CD4-positive, alpha-beta T cell (primary cell): ENCODE measurements at regions of chr1 and their contacts with region 1.

Region 1: DNA sequence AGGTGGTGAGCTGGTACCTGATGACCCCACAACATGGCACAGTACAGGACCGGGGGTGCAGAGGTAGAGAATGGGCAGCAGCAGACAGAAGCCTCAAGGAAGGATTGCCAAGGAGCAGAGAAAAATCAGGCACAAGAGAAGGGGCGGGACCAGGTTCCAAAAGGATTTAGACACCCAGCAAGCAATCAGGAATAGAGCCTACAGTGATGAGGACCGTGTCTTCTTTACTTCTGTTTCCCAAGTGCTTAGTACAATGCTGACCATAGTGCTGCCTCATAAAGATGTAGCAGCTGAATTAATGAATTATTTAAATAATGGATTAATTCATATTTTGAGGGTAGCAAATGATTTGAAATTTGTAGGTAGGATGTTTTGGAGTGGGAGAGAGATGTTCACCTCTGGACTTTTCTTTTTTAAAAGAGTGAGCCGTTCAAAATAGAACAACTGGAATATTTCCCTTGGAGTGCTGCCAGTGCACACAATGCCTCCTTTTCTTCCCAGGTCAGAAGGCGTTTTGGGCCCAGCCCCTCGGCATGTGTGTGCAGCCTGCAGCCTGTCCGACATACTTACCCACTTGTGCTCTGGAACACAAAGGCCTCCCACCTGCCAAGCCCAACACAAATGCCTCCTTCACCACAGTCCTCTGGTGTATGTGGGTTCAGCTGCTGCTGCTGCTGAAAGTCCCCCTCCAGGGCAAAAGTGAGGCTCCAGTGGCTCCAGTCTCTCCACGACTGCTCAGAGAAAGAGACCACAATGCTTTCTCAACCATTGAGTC is 19.6 kb downstream of the KANK4 start:
- DNase-seq: no peak
- ATAC-seq: no peak
- H3K4me3 ChIP-seq: no peak overlapping the region
- H3K4me3 Mint-ChIP-seq: no peak overlapping the region
- H3K27ac ChIP-seq: no peak overlapping the region
- H3K27ac Mint-ChIP-seq: no peak overlapping the region
- H3K4me1 ChIP-seq: peaks cover 14% of the 10 kb centered on the region
- H3K4me1 Mint-ChIP-seq: peaks cover 11% of the 10 kb centered on the region
- H3K27me3 ChIP-seq: no peaks in the 10 kb centered on the region
- H3K27me3 Mint-ChIP-seq: no peaks in the 10 kb centered on the region
- CTCF ChIP-seq: no peak

Region 2: GRCh38 chr1:62175568-62176179 is 123.9 kb before region 1 on chr1:
- CTCF ChIA-PET with region 1: no interaction called
- POLR2A ChIA-PET with region 1: no interaction called
- intact Hi-C with region 1: no loop called
- DNase-seq: peak in 12 of 14 experiments; percentile 2 to 69 (median 18)
- ATAC-seq: peak; percentile 41
- H3K4me3 ChIP-seq: no peak overlapping the region
- H3K4me3 Mint-ChIP-seq: no peak overlapping the region
- H3K27ac ChIP-seq: no peak overlapping the region
- H3K27ac Mint-ChIP-seq: no peak overlapping the region
- H3K4me1 ChIP-seq: no peaks in the 10 kb centered on the region
- H3K4me1 Mint-ChIP-seq: no peaks in the 10 kb centered on the region
- H3K27me3 ChIP-seq: no peaks in the 10 kb centered on the region
- H3K27me3 Mint-ChIP-seq: peaks cover 7% of the 10 kb centered on the region
- CTCF ChIP-seq: peak; percentile 76

Region 3: GRCh38 chr1:62265956-62266935 is 33.4 kb before region 1 on chr1:
- CTCF ChIA-PET with region 1: no interaction called
- POLR2A ChIA-PET with region 1: no interaction called
- intact Hi-C with region 1: loop called in 1 of 2 experiments (anchors 5 kb)
- DNase-seq: no peak
- ATAC-seq: no peak
- H3K4me3 ChIP-seq: no peak overlapping the region
- H3K4me3 Mint-ChIP-seq: no peak overlapping the region
- H3K27ac ChIP-seq: no peak overlapping the region
- H3K27ac Mint-ChIP-seq: no peak overlapping the region
- H3K4me1 ChIP-seq: peaks cover 3% of the 10 kb centered on the region
- H3K4me1 Mint-ChIP-seq: peaks cover 8% of the 10 kb centered on the region
- H3K27me3 ChIP-seq: peaks cover 0 to 3% of the 10 kb centered on the region in 2 experiments
- H3K27me3 Mint-ChIP-seq: peaks cover 12% of the 10 kb centered on the region
- CTCF ChIP-seq: no peak

Region 4: GRCh38 chr1:62539028-62539447 is 239.4 kb after region 1 on chr1:
- CTCF ChIA-PET with region 1: no interaction called
- POLR2A ChIA-PET with region 1: no interaction called
- intact Hi-C with region 1: no loop called
- DNase-seq: no peak
- ATAC-seq: no peak
- H3K4me3 ChIP-seq: no peak overlapping the region
- H3K4me3 Mint-ChIP-seq: no peak overlapping the region
- H3K27ac ChIP-seq: no peak overlapping the region
- H3K27ac Mint-ChIP-seq: no peak overlapping the region
- H3K4me1 ChIP-seq: no peaks in the 10 kb centered on the region
- H3K4me1 Mint-ChIP-seq: no peaks in the 10 kb centered on the region
- H3K27me3 ChIP-seq: no peaks in the 10 kb centered on the region
- H3K27me3 Mint-ChIP-seq: no peaks in the 10 kb centered on the region
- CTCF ChIP-seq: no peak

Region 5: GRCh38 chr1:63501256-63501655 is 1201.6 kb after region 1 on chr1:
- CTCF ChIA-PET with region 1: no interaction called
- POLR2A ChIA-PET with region 1: no interaction called
- intact Hi-C with region 1: no loop called
- DNase-seq: no peak
- ATAC-seq: no peak
- H3K4me3 ChIP-seq: no peak overlapping the region
- H3K4me3 Mint-ChIP-seq: no peak overlapping the region
- H3K27ac ChIP-seq: no peak overlapping the region
- H3K27ac Mint-ChIP-seq: no peak overlapping the region
- H3K4me1 ChIP-seq: no peaks in the 10 kb centered on the region
- H3K4me1 Mint-ChIP-seq: no peaks in the 10 kb centered on the region
- H3K27me3 ChIP-seq: no peaks in the 10 kb centered on the region
- H3K27me3 Mint-ChIP-seq: no peaks in the 10 kb centered on the region
- CTCF ChIP-seq: no peak